Activated CD4-positive, alpha-beta memory T cell treated with anti-CD3 and anti-CD28 coated beads for 36 hours (primary cell): ENCODE measurements at regions of chr10 and their contacts with region 1.

Region 1: GRCh38 chr10:30701451-30702173 is 72.1 kb upstream of the LYZL2 start:
- DNase-seq: peak; percentile 94
- H3K4me3 Mint-ChIP-seq: peak overlapping the region; percentile 57
- H3K27ac Mint-ChIP-seq: peak overlapping the region; percentile 98
- H3K4me1 Mint-ChIP-seq: peaks cover 90% of the 10 kb centered on the region
- H3K27me3 Mint-ChIP-seq: no peaks in the 10 kb centered on the region

Region 2: DNA sequence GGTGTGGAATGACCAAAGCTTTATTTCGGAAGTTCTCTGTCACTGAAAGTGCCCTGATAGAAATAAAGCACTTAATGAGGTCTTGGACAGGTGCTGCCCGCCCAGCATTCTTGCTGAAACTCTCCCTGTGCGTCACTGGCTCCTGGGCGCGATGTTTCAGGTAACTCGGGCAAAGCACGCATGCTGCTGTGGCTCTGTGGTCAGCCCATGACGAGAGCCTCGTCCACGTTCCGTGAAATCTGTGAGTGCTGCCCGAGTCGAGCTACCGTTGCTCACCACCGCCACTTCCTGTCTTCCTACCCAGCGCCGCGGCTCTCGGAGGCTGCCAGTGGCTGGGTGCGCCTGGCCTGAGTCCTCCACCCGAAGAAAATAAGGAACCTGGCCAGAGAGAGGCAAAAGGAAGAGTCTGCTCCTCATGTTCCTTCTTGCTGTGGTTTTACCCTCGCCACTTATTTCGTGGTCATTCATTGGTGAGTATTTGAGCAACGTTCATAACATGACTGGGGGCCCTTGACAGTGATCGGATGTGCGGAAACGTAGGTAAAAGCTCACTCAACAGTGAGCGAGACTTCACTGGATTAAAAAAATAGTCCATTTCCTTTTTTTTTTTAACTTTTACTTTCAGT is 172.1 kb before region 1 on chr10:
- CTCF ChIA-PET with region 1: no interaction called
- POLR2A ChIA-PET with region 1: no interaction called
- intact Hi-C with region 1: loop called (anchors 5 kb)
- DNase-seq: peak; percentile 90
- H3K4me3 Mint-ChIP-seq: peak overlapping the region; percentile 76
- H3K27ac Mint-ChIP-seq: peak overlapping the region; percentile 93
- H3K4me1 Mint-ChIP-seq: peaks cover 60% of the 10 kb centered on the region
- H3K27me3 Mint-ChIP-seq: no peaks in the 10 kb centered on the region

Region 3: DNA sequence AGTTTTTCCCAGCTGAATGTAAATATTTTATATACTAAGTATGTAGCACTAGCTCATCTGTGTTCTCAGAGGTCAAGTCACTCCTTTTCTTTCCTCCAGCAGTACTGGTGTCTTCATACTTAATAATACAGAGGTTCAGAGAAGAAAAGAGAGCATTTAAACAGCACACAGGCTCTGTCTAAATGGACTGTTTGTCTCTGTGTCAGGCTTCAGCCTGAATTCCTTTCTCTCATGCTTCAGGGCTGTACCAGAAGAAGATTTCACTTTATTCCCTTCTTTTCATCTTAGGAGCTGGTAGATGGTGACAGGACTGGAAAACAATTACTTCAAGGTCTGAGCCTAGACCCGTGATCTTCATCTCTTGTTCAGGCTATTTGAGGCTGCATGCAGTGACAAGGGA is 20.7 kb before region 1 on chr10:
- CTCF ChIA-PET with region 1: interaction called, 69 read pairs
- POLR2A ChIA-PET with region 1: interaction called, 49 read pairs
- intact Hi-C with region 1: loop called (anchors 1 kb)
- DNase-seq: no peak
- H3K4me3 Mint-ChIP-seq: no peak overlapping the region
- H3K27ac Mint-ChIP-seq: peak overlapping the region; percentile 92
- H3K4me1 Mint-ChIP-seq: peaks cover 69% of the 10 kb centered on the region
- H3K27me3 Mint-ChIP-seq: peaks cover 15% of the 10 kb centered on the region

Region 4: GRCh38 chr10:30727524-30727923 is 25.9 kb after region 1 on chr10:
- CTCF ChIA-PET with region 1: no interaction called
- POLR2A ChIA-PET with region 1: no interaction called
- intact Hi-C with region 1: no loop called
- DNase-seq: no peak
- H3K4me3 Mint-ChIP-seq: no peak overlapping the region
- H3K27ac Mint-ChIP-seq: no peak overlapping the region
- H3K4me1 Mint-ChIP-seq: peaks cover 7% of the 10 kb centered on the region
- H3K27me3 Mint-ChIP-seq: no peaks in the 10 kb centered on the region

Region 5: GRCh38 chr10:30986053-30986555 is 284.5 kb after region 1 on chr10:
- CTCF ChIA-PET with region 1: no interaction called
- POLR2A ChIA-PET with region 1: no interaction called
- intact Hi-C with region 1: loop called (anchors 1 kb)
- DNase-seq: no peak
- H3K4me3 Mint-ChIP-seq: no peak overlapping the region
- H3K27ac Mint-ChIP-seq: peak overlapping the region; percentile 76
- H3K4me1 Mint-ChIP-seq: peaks cover 15% of the 10 kb centered on the region
- H3K27me3 Mint-ChIP-seq: no peaks in the 10 kb centered on the region

Region 6: GRCh38 chr10:31340343-31340742 is 638.7 kb after region 1 on chr10:
- CTCF ChIA-PET with region 1: no interaction called
- POLR2A ChIA-PET with region 1: no interaction called
- intact Hi-C with region 1: loop called (anchors 5 kb)
- DNase-seq: peak; percentile 38
- H3K4me3 Mint-ChIP-seq: no peak overlapping the region
- H3K27ac Mint-ChIP-seq: no peak overlapping the region
- H3K4me1 Mint-ChIP-seq: peaks cover 24% of the 10 kb centered on the region
- H3K27me3 Mint-ChIP-seq: no peaks in the 10 kb centered on the region

Region 7: GRCh38 chr10:32332299-32332750 is 1630.7 kb after region 1 on chr10:
- CTCF ChIA-PET with region 1: no interaction called
- POLR2A ChIA-PET with region 1: no interaction called
- intact Hi-C with region 1: loop called (anchors 5 kb)
- DNase-seq: peak; percentile 90
- H3K4me3 Mint-ChIP-seq: peak overlapping the region; percentile 75
- H3K27ac Mint-ChIP-seq: peak overlapping the region; percentile 91
- H3K4me1 Mint-ChIP-seq: peaks cover 93% of the 10 kb centered on the region
- H3K27me3 Mint-ChIP-seq: no peaks in the 10 kb centered on the region